Endothelial cell of umbilical vein (primary cell): ENCODE measurements at regions of chr5 and their contacts with region 1.

Region 1: DNA sequence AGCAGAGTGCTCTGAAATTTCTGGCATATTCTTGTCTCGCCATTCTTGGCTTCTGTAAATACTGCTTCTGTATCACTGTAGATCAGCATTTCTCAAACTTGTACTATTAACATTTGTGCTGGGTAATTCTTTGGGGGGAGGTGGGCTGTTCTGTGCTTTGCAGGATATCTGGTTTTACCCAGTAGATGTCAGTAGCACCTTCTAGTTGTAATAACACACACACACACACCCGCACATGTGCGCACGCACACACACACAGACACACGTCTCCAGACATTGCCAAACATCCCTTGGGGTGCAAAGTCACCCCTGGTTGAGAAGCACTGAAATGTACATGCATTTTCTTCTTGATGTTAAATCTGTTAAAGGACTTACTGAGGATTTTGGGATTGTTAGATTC is 304.1 kb downstream of the MAT2B start:
- DNase-seq: peak; percentile 63
- H3K4me3 ChIP-seq: no peak overlapping the region
- H3K27ac ChIP-seq: no peak overlapping the region
- H3K4me1 ChIP-seq: peaks cover 11% of the 10 kb centered on the region
- H3K27me3 ChIP-seq: no peaks in the 10 kb centered on the region
- CTCF ChIP-seq: peak in 1 of 2 donors; percentile 15
- POLR2A ChIP-seq: no peak

Region 2: GRCh38 chr5:163770625-163771024 is 38.8 kb before region 1 on chr5:
- CTCF ChIA-PET with region 1: no interaction called
- POLR2A ChIA-PET with region 1: no interaction called
- dilution Hi-C with region 1: no loop called
- intact Hi-C with region 1: no loop called
- DNase-seq: peak; percentile 35
- H3K4me3 ChIP-seq: no peak overlapping the region
- H3K27ac ChIP-seq: no peak overlapping the region
- H3K4me1 ChIP-seq: peaks cover 23% of the 10 kb centered on the region
- H3K27me3 ChIP-seq: no peaks in the 10 kb centered on the region
- CTCF ChIP-seq: no peak
- POLR2A ChIP-seq: no peak

Region 3: GRCh38 chr5:164002628-164003027 is 193.2 kb after region 1 on chr5:
- CTCF ChIA-PET with region 1: no interaction called
- POLR2A ChIA-PET with region 1: no interaction called
- dilution Hi-C with region 1: no loop called
- intact Hi-C with region 1: loop called (anchors 2 kb)
- DNase-seq: no peak
- H3K4me3 ChIP-seq: no peak overlapping the region
- H3K27ac ChIP-seq: no peak overlapping the region
- H3K4me1 ChIP-seq: no peaks in the 10 kb centered on the region
- H3K27me3 ChIP-seq: no peaks in the 10 kb centered on the region
- CTCF ChIP-seq: no peak
- POLR2A ChIP-seq: no peak